ENCODE measurements at regions of chr5 and their contacts with region 1.

Region 1: DNA sequence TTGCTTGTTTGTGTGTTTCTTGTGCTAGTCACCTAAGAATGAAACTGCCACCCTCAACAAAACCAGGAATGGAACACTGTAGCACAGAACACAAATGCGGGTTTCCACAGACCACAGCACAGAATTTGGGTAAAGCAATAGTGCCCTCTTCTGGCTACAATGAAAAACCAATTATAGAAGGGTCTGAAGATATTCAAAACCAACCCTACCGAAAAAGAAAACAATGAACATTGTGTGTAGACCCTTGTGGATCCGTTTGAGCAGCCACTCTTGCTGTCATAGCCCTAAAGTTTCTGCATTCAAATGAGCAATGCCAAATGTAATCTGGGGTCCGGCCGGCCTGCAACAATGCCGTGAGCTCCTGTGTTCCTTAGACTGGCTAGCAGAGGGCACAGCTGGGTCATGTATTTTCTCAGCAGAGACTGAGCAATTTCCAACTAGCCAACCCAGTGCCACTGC is 8.3 kb upstream of the ENC1 start:
- DNase-seq: peak; percentile 59
- ATAC-seq: peak; percentile 87
- H3K4me3 Mint-ChIP-seq: no peak overlapping the region
- H3K27ac Mint-ChIP-seq: no peak overlapping the region
- H3K4me1 Mint-ChIP-seq: no peaks in the 10 kb centered on the region
- H3K27me3 Mint-ChIP-seq: peaks cover 6% of the 10 kb centered on the region

Region 2: GRCh38 chr5:73591102-73591695 is 1057.7 kb before region 1 on chr5:
- CTCF ChIA-PET with region 1: interaction called, 6 read pairs
- POLR2A ChIA-PET with region 1: no interaction called
- intact Hi-C with region 1: loop called in 1 of 2 experiments (anchors 1 kb)
- DNase-seq: peak; percentile 44
- ATAC-seq: peak; percentile 63
- H3K4me3 Mint-ChIP-seq: no peak overlapping the region
- H3K27ac Mint-ChIP-seq: no peak overlapping the region
- H3K4me1 Mint-ChIP-seq: no peaks in the 10 kb centered on the region
- H3K27me3 Mint-ChIP-seq: no peaks in the 10 kb centered on the region

Region 3: GRCh38 chr5:73902327-73903051 is 746.4 kb before region 1 on chr5:
- CTCF ChIA-PET with region 1: interaction called, 25 read pairs
- POLR2A ChIA-PET with region 1: no interaction called
- intact Hi-C with region 1: loop called (anchors 1 kb)
- DNase-seq: no peak
- ATAC-seq: no peak
- H3K4me3 Mint-ChIP-seq: no peak overlapping the region
- H3K27ac Mint-ChIP-seq: no peak overlapping the region
- H3K4me1 Mint-ChIP-seq: peaks cover 7% of the 10 kb centered on the region
- H3K27me3 Mint-ChIP-seq: peaks cover 18% of the 10 kb centered on the region

Region 4: GRCh38 chr5:73945498-73945897 is 703.4 kb before region 1 on chr5:
- CTCF ChIA-PET with region 1: interaction called, 3 read pairs
- POLR2A ChIA-PET with region 1: no interaction called
- intact Hi-C with region 1: loop called in 1 of 2 experiments (anchors 1 kb)
- DNase-seq: peak; percentile 56
- ATAC-seq: no peak
- H3K4me3 Mint-ChIP-seq: no peak overlapping the region
- H3K27ac Mint-ChIP-seq: no peak overlapping the region
- H3K4me1 Mint-ChIP-seq: no peaks in the 10 kb centered on the region
- H3K27me3 Mint-ChIP-seq: peaks cover 16% of the 10 kb centered on the region

Region 5: DNA sequence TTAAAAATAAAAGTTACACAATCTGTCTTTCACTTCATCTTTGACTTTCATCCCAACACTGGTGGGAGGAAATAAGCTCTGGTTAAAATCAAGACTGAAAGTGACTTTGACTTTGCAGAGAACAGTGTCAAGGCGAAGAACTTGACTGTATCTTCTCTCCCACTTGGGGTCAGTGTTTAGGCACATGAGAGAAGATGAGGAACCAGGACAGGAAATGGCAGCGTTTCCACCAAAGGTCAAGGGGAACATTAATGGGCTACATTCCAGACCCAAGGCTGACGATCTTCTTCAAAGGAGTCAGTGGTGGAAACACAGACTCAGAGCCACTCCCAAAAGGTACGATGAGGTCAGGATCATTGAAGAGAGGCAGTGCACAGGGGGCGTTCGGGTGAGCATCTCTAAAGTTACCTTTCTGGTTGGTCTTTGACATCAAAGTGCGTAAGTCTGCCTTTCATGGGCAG is 613.3 kb before region 1 on chr5:
- CTCF ChIA-PET with region 1: interaction called, 3 read pairs
- POLR2A ChIA-PET with region 1: no interaction called
- intact Hi-C with region 1: loop called (anchors 5 kb)
- DNase-seq: no peak
- ATAC-seq: peak; percentile 63
- H3K4me3 Mint-ChIP-seq: no peak overlapping the region
- H3K27ac Mint-ChIP-seq: no peak overlapping the region
- H3K4me1 Mint-ChIP-seq: peaks cover 7% of the 10 kb centered on the region
- H3K27me3 Mint-ChIP-seq: peaks cover 11% of the 10 kb centered on the region

Region 6: GRCh38 chr5:74394916-74395781 is 253.7 kb before region 1 on chr5:
- CTCF ChIA-PET with region 1: no interaction called
- POLR2A ChIA-PET with region 1: no interaction called
- intact Hi-C with region 1: loop called (anchors 2 to 5 kb)
- DNase-seq: no peak
- ATAC-seq: no peak
- H3K4me3 Mint-ChIP-seq: no peak overlapping the region
- H3K27ac Mint-ChIP-seq: no peak overlapping the region
- H3K4me1 Mint-ChIP-seq: peaks cover 7% of the 10 kb centered on the region
- H3K27me3 Mint-ChIP-seq: no peaks in the 10 kb centered on the region